HepG2 (cell line): ENCODE measurements at regions of chr1 and their contacts with region 1.

Region 1: DNA sequence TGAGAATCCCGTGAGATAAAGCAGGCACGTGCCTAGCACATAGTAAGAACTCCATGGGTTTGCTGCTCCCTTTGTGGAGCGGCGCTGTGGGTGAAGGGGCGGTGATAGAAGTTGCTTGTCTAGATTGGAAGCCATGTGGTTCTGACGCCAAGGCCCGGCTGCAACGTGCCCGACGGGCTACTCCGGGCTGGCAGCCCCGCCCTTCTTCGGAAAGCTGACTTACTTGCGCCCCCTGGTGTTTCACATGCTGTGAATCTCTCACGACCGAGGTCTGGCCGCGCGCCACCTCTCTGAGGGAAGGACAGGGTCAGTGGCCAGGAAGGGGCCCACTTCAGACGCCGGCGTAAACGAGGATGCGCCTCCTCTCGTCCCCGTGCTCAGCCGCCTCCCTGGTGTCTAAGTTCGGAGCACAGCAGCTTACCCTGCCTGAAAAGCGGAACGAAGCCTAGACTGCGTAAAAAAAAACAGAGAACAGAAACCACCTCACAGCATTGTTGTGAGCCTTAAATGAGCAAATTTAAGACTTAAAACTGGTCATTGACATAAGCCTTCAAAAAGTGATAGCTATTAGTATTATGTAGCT is 42.6 kb upstream of the WNT2B start:
- DNase-seq: peak; percentile 82
- ATAC-seq: peak; percentile 92
- H3K4me3 ChIP-seq: peak overlapping the region in 1 of 3 experiments; percentile 41; a peak in 2 of 6 replicates
- H3K27ac ChIP-seq: no peak overlapping the region
- H3K4me1 ChIP-seq: peaks cover 33% of the 10 kb centered on the region
- H3K27me3 ChIP-seq: peaks cover 0 to 3% of the 10 kb centered on the region in 2 experiments; a peak in 1 of 5 replicates
- CTCF ChIP-seq: peak; percentile 98
- EP300 ChIP-seq: no peak
- POLR2A ChIP-seq: no peak
- RAD21 ChIP-seq: peak; percentile 91

Region 2: GRCh38 chr1:112390775-112391602 is 75.2 kb before region 1 on chr1:
- CTCF ChIA-PET with region 1: interaction called, 66 read pairs
- POLR2A ChIA-PET with region 1: interaction called, 5 read pairs
- in situ Hi-C with region 1: loop called (anchors 5 kb)
- intact Hi-C with region 1: loop called (anchors 1 kb)
- DNase-seq: peak; percentile 88
- ATAC-seq: peak; percentile 76
- H3K4me3 ChIP-seq: peak overlapping the region; percentile 48 to 74 (median 56)
- H3K27ac ChIP-seq: no peak overlapping the region
- H3K4me1 ChIP-seq: peaks cover 71% of the 10 kb centered on the region
- H3K27me3 ChIP-seq: no peaks in the 10 kb centered on the region
- CTCF ChIP-seq: peak; percentile 95
- EP300 ChIP-seq: no peak
- POLR2A ChIP-seq: no peak
- RAD21 ChIP-seq: peak; percentile 87

Region 3: GRCh38 chr1:112395821-112396652 is 70.1 kb before region 1 on chr1 and contains the start of gene CTTNBP2NL:
- CTCF ChIA-PET with region 1: interaction called, 66 read pairs
- POLR2A ChIA-PET with region 1: interaction called, 5 read pairs
- in situ Hi-C with region 1: loop called (anchors 5 kb)
- intact Hi-C with region 1: loop called (anchors 1 kb)
- DNase-seq: peak; percentile 93
- ATAC-seq: peak; percentile 97
- H3K4me3 ChIP-seq: peak within 1 kb of the TSS; percentile 87 to 99 (median 92)
- H3K27ac ChIP-seq: peak within 1 kb of the TSS; percentile 56
- H3K4me1 ChIP-seq: peaks cover 43% of the 10 kb centered on the region
- H3K27me3 ChIP-seq: no peaks in the 10 kb centered on the region; a peak in 1 of 5 replicates
- CTCF ChIP-seq: 0 out of 2 replicates have a peak, but pooled peaks have one; percentile 5
- EP300 ChIP-seq: no peak
- POLR2A ChIP-seq: peak; percentile 58 to 86
- RAD21 ChIP-seq: no peak
- total RNA-seq, gene CTTNBP2NL: 4.1 and 6.1 TPM in 2 replicates

Region 4: GRCh38 chr1:112477550-112477949 is 11.4 kb after region 1 on chr1:
- CTCF ChIA-PET with region 1: no interaction called
- POLR2A ChIA-PET with region 1: no interaction called
- in situ Hi-C with region 1: no loop called
- intact Hi-C with region 1: no loop called
- DNase-seq: no peak
- ATAC-seq: no peak
- H3K4me3 ChIP-seq: no peak overlapping the region
- H3K27ac ChIP-seq: no peak overlapping the region
- H3K4me1 ChIP-seq: no peaks in the 10 kb centered on the region
- H3K27me3 ChIP-seq: no peaks in the 10 kb centered on the region; a peak in 1 of 5 replicates
- CTCF ChIP-seq: no peak
- EP300 ChIP-seq: no peak
- POLR2A ChIP-seq: no peak
- RAD21 ChIP-seq: no peak